PC-9 (cell line): ENCODE measurements at regions of chr9 and their contacts with region 1.

Region 1: GRCh38 chr9:129460323-129461261 is 160.3 kb downstream of the C9orf50 start:
- DNase-seq: peak; percentile 85 to 94
- H3K4me3 ChIP-seq: peak overlapping the region; percentile 64
- H3K27ac ChIP-seq: peak overlapping the region; percentile 89
- H3K4me1 ChIP-seq: peaks cover 47% of the 10 kb centered on the region
- H3K27me3 ChIP-seq: no peaks in the 10 kb centered on the region
- CTCF ChIP-seq: no peak

Region 2: DNA sequence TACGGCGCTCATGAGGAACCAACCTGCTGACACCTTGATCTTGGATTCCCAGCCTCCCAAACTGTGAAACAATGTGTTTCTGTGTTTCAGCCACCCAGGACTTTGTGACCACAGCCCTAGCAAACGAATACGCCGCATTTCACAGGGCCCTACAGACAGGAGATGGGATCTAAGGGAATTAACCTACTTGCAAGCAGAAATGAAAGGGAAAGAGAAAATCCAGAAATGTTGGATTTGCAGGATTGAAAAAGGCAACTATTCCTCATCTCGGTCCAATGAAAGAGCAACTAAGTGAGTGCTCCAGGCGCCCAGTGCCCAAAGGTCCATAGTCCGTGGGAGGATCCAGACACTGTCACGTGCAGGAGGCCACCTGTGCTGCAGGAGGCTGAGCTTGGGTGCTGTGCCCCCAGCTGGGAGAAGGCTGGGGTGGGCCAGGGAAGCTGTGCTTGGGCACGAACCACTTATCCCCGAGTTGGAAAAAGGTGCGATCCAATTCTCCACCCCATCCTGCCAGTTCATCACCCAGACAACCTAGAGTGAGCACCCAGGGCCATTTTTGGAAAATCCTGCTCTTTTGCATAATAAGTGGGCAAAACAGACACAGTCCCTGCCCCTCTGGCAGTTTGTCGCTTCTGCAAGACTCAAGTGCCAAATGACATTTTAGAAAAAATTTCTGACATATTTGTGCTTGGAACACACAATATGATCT is 17.6 kb before region 1 on chr9:
- CTCF ChIA-PET with region 1: interaction called, 13 read pairs
- POLR2A ChIA-PET with region 1: no interaction called
- intact Hi-C with region 1: no loop called
- DNase-seq: no peak
- H3K4me3 ChIP-seq: no peak overlapping the region
- H3K27ac ChIP-seq: no peak overlapping the region
- H3K4me1 ChIP-seq: no peaks in the 10 kb centered on the region
- H3K27me3 ChIP-seq: peaks cover 7% of the 10 kb centered on the region; the same call in 1 of the 2 replicates
- CTCF ChIP-seq: no peak

Region 3: DNA sequence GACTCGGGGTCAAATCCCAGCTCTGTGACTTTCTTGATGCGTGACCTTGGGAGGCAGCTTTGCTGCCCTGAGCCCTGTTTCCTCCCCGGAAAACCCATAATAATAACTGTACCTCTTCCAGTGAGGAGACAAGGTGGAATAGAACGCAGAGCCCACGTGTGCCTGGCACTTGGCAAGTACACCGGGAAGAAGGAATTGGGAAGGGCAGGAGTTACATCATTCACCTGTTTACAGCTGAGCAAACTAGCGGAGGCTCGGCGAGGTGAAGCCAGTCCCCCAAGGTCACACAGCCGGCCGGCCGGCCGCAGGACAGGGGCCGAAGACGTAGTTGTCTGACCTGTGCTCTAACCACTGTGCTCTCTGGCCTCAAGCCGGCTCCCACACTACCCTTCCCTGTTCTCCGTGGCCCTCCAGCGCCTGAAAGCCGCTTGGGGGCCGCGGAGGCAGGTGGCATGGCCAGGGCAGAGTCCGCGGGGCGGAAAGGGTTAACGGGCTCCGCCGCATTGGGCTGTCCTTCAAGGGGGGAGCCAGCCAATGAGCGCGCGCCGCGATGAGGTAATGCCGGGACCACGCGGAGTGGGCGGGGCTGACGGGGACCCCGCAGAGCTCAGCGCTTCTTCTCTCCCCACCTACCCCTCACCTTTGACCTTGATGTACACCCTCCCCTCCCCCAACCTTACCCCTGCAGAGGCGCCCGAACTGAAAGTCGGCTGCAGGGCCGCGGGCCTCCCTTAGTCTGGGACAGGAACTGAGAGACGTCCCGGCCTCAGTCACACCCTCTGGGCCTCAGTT is 35.1 kb after region 1 on chr9:
- CTCF ChIA-PET with region 1: no interaction called
- POLR2A ChIA-PET with region 1: interaction called, 17 read pairs
- intact Hi-C with region 1: no loop called
- DNase-seq: peak; percentile 78 to 95
- H3K4me3 ChIP-seq: peak overlapping the region; percentile 60
- H3K27ac ChIP-seq: peak overlapping the region; percentile 64
- H3K4me1 ChIP-seq: peaks cover 52% of the 10 kb centered on the region
- H3K27me3 ChIP-seq: no peaks in the 10 kb centered on the region
- CTCF ChIP-seq: no peak

Region 4: DNA sequence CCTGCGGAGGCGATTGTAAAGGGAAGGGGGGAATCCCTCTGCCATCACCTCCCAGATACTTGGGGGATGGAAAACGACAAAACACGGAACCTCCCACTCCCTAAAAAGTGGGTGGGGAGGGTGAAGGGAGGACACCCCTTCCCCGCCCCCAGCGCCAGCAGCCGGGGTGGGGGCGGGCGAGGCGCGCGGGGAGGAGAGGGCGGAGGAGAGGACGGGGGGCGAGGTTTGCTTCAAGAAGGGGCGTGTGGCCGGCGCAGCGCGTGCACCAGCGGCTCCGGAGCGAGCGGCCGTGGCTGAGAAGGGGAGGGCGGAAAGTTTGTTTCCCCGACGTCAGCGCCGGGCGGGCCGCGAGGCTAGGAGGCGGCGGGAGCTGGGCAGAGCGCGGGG is 204.8 kb after region 1 on chr9 and contains the start of gene PRRX2:
- CTCF ChIA-PET with region 1: no interaction called
- POLR2A ChIA-PET with region 1: interaction called, 12 read pairs
- intact Hi-C with region 1: no loop called
- DNase-seq: no peak
- H3K4me3 ChIP-seq: no peak within 1 kb of the TSS
- H3K27ac ChIP-seq: no peak within 1 kb of the TSS
- H3K4me1 ChIP-seq: no peaks in the 10 kb centered on the region
- H3K27me3 ChIP-seq: peaks cover 3% of the 10 kb centered on the region; the same call in 1 of the 2 replicates
- CTCF ChIP-seq: no peak
- total RNA-seq, gene PRRX2: 0.98 and 1.6 TPM in 2 replicates

Region 5: DNA sequence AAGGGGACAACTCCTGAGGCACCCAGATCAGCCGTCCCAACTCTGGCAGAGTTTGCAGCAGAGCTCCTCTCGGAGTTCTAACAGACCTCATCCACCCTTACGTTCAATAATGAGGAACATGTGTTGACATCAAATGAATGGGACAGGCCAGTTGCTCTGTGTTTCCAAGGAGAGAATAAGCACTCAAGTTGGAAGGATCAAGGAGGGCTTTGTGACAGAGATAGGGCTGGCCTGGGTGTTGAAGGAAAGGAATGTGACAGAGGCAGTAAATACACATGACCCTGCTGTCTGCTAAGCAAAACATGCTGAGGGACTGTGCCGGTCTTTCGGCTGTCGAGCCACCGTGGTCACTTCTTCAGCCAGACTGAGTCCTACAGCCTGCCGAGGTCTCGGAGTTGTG is 641.3 kb after region 1 on chr9:
- CTCF ChIA-PET with region 1: no interaction called
- POLR2A ChIA-PET with region 1: interaction called, 20 read pairs
- intact Hi-C with region 1: no loop called
- DNase-seq: no peak
- H3K4me3 ChIP-seq: no peak overlapping the region
- H3K27ac ChIP-seq: no peak overlapping the region
- H3K4me1 ChIP-seq: no peaks in the 10 kb centered on the region
- H3K27me3 ChIP-seq: no peaks in the 10 kb centered on the region
- CTCF ChIP-seq: no peak